Endothelial cell of umbilical vein (primary cell): ENCODE measurements at regions of chr4 and their contacts with region 1.

Region 1: DNA sequence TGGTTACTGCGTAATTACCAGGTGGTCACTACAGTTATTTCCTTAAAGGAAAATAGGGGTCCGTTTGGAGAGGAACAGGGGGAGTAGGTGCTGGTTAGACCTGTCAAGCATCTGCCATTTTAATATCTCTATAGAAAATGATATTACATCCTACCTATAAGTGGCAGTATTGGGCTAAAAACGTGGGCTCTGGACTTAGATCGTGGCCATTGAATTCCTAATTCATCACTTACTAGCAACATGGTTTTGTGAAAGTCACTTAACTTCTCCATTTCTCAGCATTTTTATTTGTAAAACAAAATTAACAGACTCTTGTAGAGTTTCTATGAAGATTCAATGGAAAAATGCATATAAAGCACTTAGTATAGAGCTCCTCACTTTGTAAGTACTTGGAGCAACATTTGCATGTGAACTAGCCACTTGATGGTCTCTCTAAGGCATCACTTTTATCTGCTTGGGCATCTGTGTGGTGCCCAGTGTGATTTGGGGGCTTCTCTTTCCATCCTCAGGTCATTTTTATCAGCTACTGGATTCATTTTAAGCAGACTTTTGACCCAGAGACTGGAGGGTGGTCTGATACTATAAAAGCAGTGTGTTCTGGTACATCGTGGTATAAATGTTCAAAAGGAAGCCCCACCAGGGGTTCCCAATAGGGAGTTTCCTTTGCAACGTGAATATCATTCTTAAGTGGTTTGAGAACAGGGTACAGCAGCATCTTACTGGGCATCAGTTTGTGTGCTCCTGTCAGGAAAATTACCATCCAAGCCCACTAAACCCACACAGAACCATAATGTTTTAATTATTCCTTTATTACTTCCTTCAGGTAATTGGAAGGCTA is 42.7 kb upstream of the RASSF6 start:
- DNase-seq: peak; percentile 76
- H3K4me3 ChIP-seq: no peak overlapping the region
- H3K27ac ChIP-seq: peak overlapping the region; percentile 94
- H3K4me1 ChIP-seq: peaks cover 28% of the 10 kb centered on the region
- H3K27me3 ChIP-seq: no peaks in the 10 kb centered on the region
- CTCF ChIP-seq: peak; percentile 25 to 44
- POLR2A ChIP-seq: no peak

Region 2: DNA sequence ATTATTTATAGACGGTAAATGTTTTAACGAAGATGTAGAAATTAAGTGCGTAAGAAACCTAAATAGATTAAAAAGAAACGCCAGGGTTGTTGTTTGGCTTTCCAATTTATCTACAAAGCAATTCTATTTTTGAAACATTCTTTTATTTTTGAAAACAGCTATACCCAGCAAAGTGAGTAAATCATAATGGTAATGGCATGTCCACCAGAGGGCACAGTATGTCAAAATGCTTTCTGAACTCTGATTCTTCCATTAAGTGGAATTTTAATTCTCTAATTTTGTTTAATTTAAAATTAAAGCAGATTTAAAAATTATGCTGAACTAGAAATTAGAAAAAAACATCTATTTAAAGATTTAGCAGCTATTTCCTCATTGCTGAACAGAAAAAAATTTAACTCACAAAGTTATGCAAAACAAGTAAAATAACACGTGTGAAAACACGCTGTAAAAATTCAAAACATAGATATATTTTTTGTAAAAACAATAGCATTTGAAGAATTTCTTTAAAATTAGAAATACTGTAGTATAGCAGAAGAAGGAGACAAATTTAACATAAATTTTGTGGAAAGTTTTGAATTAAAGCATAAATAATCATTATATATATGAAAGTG is 69.2 kb before region 1 on chr4:
- CTCF ChIA-PET with region 1: interaction called, 13 read pairs
- POLR2A ChIA-PET with region 1: no interaction called
- dilution Hi-C with region 1: no loop called
- intact Hi-C with region 1: no loop called
- DNase-seq: peak; percentile 55
- H3K4me3 ChIP-seq: no peak overlapping the region
- H3K27ac ChIP-seq: no peak overlapping the region
- H3K4me1 ChIP-seq: no peaks in the 10 kb centered on the region
- H3K27me3 ChIP-seq: no peaks in the 10 kb centered on the region
- CTCF ChIP-seq: peak; percentile 33 to 42
- POLR2A ChIP-seq: no peak

Region 3: DNA sequence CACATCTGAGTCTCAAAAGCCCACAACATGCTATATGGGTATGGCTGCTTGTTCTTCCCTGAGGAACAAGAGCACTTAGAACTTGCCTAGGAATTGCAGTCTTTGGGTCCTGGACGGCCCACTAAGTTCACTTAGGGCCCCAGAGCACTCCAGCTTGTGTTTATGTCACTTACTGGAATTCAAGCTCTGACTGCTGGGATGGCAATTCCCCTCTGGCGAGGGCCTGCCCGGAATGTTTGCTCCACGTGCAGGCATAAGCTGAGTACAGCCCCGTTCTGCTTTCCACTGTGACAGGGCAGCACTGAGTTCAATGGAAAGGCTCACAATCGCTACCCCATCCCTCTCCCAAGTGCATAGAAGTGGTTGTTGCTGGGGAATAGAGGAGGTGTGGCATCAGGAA is 16.8 kb before region 1 on chr4:
- CTCF ChIA-PET with region 1: no interaction called
- POLR2A ChIA-PET with region 1: no interaction called
- dilution Hi-C with region 1: no loop called
- intact Hi-C with region 1: no loop called
- DNase-seq: no peak
- H3K4me3 ChIP-seq: no peak overlapping the region
- H3K27ac ChIP-seq: no peak overlapping the region
- H3K4me1 ChIP-seq: no peaks in the 10 kb centered on the region
- H3K27me3 ChIP-seq: no peaks in the 10 kb centered on the region
- CTCF ChIP-seq: no peak
- POLR2A ChIP-seq: no peak

Region 4: GRCh38 chr4:73729534-73730165 is 66.7 kb after region 1 on chr4:
- CTCF ChIA-PET with region 1: interaction called, 30 read pairs
- POLR2A ChIA-PET with region 1: no interaction called
- dilution Hi-C with region 1: no loop called
- intact Hi-C with region 1: loop called (anchors 1 kb)
- DNase-seq: peak; percentile 85
- H3K4me3 ChIP-seq: no peak overlapping the region
- H3K27ac ChIP-seq: peak overlapping the region; percentile 10
- H3K4me1 ChIP-seq: peaks cover 69% of the 10 kb centered on the region
- H3K27me3 ChIP-seq: no peaks in the 10 kb centered on the region
- CTCF ChIP-seq: peak; percentile 79 to 87
- POLR2A ChIP-seq: no peak

Region 5: GRCh38 chr4:73844352-73844751 is 181.4 kb after region 1 on chr4:
- CTCF ChIA-PET with region 1: interaction called, 7 read pairs
- POLR2A ChIA-PET with region 1: no interaction called
- dilution Hi-C with region 1: no loop called
- intact Hi-C with region 1: loop called (anchors 5 kb)
- DNase-seq: peak; percentile 57
- H3K4me3 ChIP-seq: no peak overlapping the region
- H3K27ac ChIP-seq: peak overlapping the region; percentile 46
- H3K4me1 ChIP-seq: peaks cover 30% of the 10 kb centered on the region
- H3K27me3 ChIP-seq: no peaks in the 10 kb centered on the region
- CTCF ChIP-seq: no peak
- POLR2A ChIP-seq: no peak

Region 6: DNA sequence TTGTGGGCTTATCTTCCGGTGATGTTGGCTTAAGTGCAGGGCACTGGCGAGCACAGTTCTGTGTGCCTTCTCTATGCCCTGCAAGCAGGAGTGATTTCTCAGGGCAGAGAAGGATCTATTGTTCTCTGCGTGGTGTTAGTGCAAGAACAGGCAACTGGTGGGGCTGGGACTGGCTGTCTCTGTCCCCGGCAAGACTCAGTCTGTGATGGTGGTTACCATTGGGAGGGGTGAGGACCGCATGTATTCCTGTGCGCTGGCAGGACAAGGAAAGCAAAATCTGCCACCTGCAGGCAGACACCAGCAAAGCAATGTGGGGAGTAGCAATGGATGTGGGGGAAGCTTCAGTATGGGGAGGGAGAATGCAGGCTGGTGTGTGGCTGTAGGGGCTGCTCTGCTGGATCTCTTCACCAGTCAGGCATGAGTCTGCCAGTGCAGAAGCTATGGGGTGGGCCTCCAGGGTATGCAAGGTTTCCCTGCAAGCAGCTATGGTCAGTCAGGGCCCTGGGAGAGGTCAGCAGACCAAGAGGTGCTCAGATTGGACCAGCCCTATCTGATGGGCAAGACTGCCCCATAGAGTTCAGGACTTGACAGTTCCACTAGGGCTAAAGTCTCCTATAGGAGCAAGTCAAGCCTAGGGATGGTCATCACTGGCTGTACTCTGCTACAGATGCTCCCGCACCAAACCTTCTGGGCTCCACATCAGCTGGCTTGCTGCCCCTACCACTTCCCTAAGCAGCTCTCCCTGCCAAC is 302.1 kb after region 1 on chr4:
- CTCF ChIA-PET with region 1: interaction called, 5 read pairs
- POLR2A ChIA-PET with region 1: no interaction called
- dilution Hi-C with region 1: no loop called
- intact Hi-C with region 1: loop called (anchors 1 kb)
- DNase-seq: peak; percentile 23
- H3K4me3 ChIP-seq: no peak overlapping the region
- H3K27ac ChIP-seq: no peak overlapping the region
- H3K4me1 ChIP-seq: no peaks in the 10 kb centered on the region
- H3K27me3 ChIP-seq: no peaks in the 10 kb centered on the region
- CTCF ChIP-seq: peak; percentile 18 to 48
- POLR2A ChIP-seq: no peak

Region 7: DNA sequence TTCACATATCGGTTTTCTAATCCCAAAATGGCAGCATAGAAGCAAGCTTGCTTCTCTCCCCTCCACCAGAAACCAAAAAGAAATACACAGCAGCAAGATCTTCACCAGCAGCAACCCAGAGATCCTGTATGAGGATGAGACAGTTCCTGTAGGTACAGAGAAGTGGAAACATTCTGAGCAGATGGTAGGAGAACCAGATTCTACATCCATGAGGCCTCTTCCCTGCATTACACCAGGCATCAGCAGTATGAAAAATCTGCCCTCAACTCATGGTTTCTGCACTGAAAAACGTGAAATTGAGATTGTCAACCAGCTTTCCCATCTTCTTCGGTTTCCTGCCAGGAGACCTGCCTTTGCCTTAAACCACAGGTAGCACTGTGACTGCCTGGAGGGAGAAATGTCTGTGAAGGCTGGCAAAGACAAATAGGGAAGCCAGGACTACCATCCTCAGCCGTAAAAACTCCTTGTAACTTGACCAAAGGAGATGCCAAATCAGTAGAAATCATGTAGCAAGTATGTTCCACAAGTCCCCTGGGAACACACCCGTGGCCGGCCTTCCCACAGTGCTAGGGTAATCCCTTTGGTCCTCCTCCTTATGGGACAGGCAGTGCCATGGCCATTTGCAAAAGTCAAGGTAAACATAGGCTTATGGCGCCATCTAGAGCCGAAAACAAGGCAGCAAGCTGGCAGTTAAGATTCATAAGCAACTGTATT is 471.0 kb after region 1 on chr4:
- CTCF ChIA-PET with region 1: interaction called, 95 read pairs
- POLR2A ChIA-PET with region 1: no interaction called
- dilution Hi-C with region 1: no loop called
- intact Hi-C with region 1: loop called (anchors 1 kb)
- DNase-seq: peak; percentile 90
- H3K4me3 ChIP-seq: no peak overlapping the region
- H3K27ac ChIP-seq: no peak overlapping the region
- H3K4me1 ChIP-seq: no peaks in the 10 kb centered on the region
- H3K27me3 ChIP-seq: no peaks in the 10 kb centered on the region
- CTCF ChIP-seq: peak; percentile 64 to 81
- POLR2A ChIP-seq: no peak